ENCODE measurements at regions of chr5 and their contacts with region 1.

Region 1: GRCh38 chr5:180605554-180606214 is 14.4 kb upstream of the SCGB3A1 start:
- DNase-seq: peak; percentile 80
- H3K4me3 Mint-ChIP-seq: no peak overlapping the region
- H3K27ac Mint-ChIP-seq: no peak overlapping the region
- H3K4me1 Mint-ChIP-seq: peaks cover 2% of the 10 kb centered on the region
- H3K27me3 Mint-ChIP-seq: peaks cover 10% of the 10 kb centered on the region

Region 2: GRCh38 chr5:180523629-180524466 is 81.8 kb before region 1 on chr5:
- CTCF ChIA-PET with region 1: interaction called, 14 read pairs
- DNase-seq: no peak
- H3K4me3 Mint-ChIP-seq: no peak overlapping the region
- H3K27ac Mint-ChIP-seq: no peak overlapping the region
- H3K4me1 Mint-ChIP-seq: peaks cover 33% of the 10 kb centered on the region
- H3K27me3 Mint-ChIP-seq: no peaks in the 10 kb centered on the region

Region 3: GRCh38 chr5:180618819-180619562 is 13.3 kb after region 1 on chr5:
- CTCF ChIA-PET with region 1: interaction called, 10 read pairs
- DNase-seq: peak; percentile 68
- H3K4me3 Mint-ChIP-seq: peak overlapping the region; percentile 53
- H3K27ac Mint-ChIP-seq: no peak overlapping the region
- H3K4me1 Mint-ChIP-seq: peaks cover 13% of the 10 kb centered on the region
- H3K27me3 Mint-ChIP-seq: peaks cover 6% of the 10 kb centered on the region